ENCODE measurements at regions of chr16 and their contacts with region 1.

Region 1: GRCh38 chr16:69672998-69673713 is 53.2 kb downstream of the NQO1 start:
- DNase-seq: no peak
- H3K4me3 ChIP-seq: no peak overlapping the region
- H3K27ac ChIP-seq: no peak overlapping the region
- H3K4me1 ChIP-seq: peaks cover 2% of the 10 kb centered on the region
- H3K27me3 ChIP-seq: no peaks in the 10 kb centered on the region
- CTCF ChIP-seq: no peak

Region 2: GRCh38 chr16:69579783-69580481 is 93.2 kb before region 1 on chr16:
- CTCF ChIA-PET with region 1: no interaction called
- dilution Hi-C with region 1: no loop called
- in situ Hi-C with region 1: no loop called
- intact Hi-C with region 1: loop called (anchors 10 kb)
- DNase-seq: no peak
- H3K4me3 ChIP-seq: no peak overlapping the region
- H3K27ac ChIP-seq: no peak overlapping the region
- H3K4me1 ChIP-seq: peaks cover 4% of the 10 kb centered on the region
- H3K27me3 ChIP-seq: no peaks in the 10 kb centered on the region
- CTCF ChIP-seq: no peak

Measured in mammary epithelial cell (primary cell).